ENCODE measurements at regions of chr17 and their contacts with region 1.

Region 1: DNA sequence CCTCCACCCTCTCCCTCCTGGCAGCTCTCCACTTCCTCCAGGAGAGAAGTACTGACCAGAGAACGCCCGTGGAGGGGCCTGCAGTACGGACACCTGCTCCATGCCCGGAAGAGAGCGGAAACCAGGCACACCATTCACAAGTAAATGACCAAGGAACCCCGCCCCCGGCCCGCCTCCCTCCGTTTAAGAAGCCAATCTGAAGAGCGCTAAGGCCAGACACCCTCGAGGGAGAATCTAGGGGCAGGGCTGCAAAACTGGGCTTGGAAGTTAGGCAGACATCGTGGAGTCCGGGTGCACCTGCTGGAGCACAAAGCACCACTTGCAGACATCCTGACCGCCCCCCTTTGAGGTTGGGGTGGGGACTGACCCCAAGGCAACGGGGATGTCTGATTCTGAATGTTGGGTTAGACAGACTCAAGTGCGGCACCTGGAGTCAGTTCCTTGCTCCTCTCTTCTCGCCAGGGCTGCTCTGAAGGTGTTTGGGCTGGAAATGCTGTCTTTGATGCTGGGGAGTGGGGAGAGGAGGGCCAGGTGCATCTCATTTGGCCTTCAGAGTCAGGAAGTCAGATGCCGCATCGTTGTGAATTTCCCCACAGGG is 964 bp upstream of the FAAP100 start:
- DNase-seq: peak; percentile 92
- H3K4me3 Mint-ChIP-seq: peak overlapping the region; percentile 82
- H3K27ac Mint-ChIP-seq: peak overlapping the region; percentile 81
- H3K4me1 Mint-ChIP-seq: peaks cover 6% of the 10 kb centered on the region
- H3K27me3 Mint-ChIP-seq: no peaks in the 10 kb centered on the region
- CTCF ChIP-seq: no peak

Region 2: DNA sequence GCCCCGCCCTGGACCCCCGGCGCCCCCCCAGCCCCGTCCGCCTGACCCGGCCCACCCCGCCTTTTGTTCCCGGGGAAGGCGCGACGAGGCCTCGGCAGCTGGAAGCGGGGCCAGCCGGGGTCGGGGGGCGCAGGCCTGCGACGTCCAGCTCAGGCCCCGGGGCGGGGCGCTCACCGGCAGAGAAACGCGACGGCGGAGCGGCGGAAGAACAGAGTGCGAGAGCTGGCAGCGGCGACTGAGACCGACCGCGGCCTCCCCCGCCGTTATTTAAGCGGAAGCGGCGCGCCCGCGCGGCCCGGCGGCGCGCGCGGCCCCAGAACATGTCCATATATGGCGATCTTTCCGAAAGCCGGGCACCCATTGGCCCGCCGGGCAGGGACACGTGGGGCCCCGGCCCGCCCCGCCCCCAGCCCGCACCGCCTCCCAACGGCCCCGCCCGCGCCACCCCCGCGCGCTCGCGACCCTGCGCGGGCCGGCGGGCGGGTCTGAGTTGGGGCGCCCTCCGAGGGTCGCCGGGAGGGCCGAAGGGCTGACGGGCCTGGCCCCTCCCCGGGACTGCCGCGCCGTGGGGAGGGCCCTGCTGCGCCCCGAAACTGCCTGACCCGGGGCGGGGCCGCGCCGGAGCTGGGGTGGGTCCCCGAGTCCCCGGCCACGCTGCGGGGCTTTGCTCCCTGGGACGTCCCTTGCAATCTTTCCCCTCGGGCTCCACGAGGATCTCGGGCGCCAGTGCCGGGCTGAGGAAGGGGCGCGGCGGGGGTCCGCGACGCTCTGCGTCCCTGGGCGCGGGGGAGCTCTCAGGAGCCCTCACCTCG is 40.4 kb before region 1 on chr17 and contains the start of gene ACTG1:
- CTCF ChIA-PET with region 1: interaction called, 3 read pairs
- POLR2A ChIA-PET with region 1: interaction called, 25 read pairs
- intact Hi-C with region 1: no loop called
- DNase-seq: peak; percentile 92
- H3K4me3 Mint-ChIP-seq: peak within 1 kb of the TSS; percentile 92
- H3K27ac Mint-ChIP-seq: peak within 1 kb of the TSS; percentile 91
- H3K4me1 Mint-ChIP-seq: peaks cover 25% of the 10 kb centered on the region
- H3K27me3 Mint-ChIP-seq: no peaks in the 10 kb centered on the region
- CTCF ChIP-seq: no peak
- total RNA-seq, gene ACTG1: 1,056 and 1,461 TPM in 2 replicates

Region 3: DNA sequence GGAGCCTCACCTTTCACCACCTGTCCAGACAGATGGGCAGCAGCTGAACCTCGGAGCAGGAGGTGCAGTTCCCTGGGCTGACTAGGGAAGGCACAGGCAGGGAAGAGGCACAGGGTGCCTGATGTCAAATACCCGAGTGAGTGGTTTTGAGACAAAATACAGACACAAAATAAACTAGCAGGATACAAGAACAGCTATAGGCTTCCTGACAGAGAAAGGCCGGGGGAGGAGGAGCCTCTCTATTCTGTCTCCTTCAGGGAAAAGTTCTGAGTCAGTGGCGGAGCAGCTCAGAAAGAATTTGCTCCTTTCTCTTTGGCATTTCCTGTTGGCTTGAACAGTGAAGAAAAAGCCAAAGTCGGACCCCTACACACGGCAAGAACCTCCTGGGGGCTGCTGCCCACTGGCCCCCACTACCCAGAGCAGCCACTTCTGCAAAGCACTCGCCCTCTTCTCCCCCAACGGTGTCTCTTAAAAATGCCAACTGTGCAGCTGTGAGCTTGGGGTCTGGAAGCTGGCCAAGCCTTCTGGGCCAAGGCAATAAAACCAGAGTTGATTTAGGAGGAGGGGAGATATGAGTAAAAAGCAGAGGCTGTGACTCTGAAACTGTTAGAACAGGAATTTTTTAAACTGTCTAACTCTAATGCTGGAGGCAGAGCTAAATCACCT is 13.5 kb after region 1 on chr17:
- CTCF ChIA-PET with region 1: interaction called, 3 read pairs
- POLR2A ChIA-PET with region 1: interaction called, 65 read pairs
- intact Hi-C with region 1: no loop called
- DNase-seq: peak; percentile 88
- H3K4me3 Mint-ChIP-seq: peak overlapping the region; percentile 63
- H3K27ac Mint-ChIP-seq: peak overlapping the region; percentile 71
- H3K4me1 Mint-ChIP-seq: peaks cover 14% of the 10 kb centered on the region
- H3K27me3 Mint-ChIP-seq: no peaks in the 10 kb centered on the region
- CTCF ChIP-seq: no peak

Region 4: GRCh38 chr17:81601525-81602120 is 48.5 kb after region 1 on chr17:
- CTCF ChIA-PET with region 1: interaction called, 28 read pairs
- POLR2A ChIA-PET with region 1: interaction called, 12 read pairs
- intact Hi-C with region 1: loop called (anchors 1 kb)
- DNase-seq: peak; percentile 72
- H3K4me3 Mint-ChIP-seq: no peak overlapping the region
- H3K27ac Mint-ChIP-seq: no peak overlapping the region
- H3K4me1 Mint-ChIP-seq: no peaks in the 10 kb centered on the region
- H3K27me3 Mint-ChIP-seq: no peaks in the 10 kb centered on the region
- CTCF ChIP-seq: peak; percentile 80

Region 5: DNA sequence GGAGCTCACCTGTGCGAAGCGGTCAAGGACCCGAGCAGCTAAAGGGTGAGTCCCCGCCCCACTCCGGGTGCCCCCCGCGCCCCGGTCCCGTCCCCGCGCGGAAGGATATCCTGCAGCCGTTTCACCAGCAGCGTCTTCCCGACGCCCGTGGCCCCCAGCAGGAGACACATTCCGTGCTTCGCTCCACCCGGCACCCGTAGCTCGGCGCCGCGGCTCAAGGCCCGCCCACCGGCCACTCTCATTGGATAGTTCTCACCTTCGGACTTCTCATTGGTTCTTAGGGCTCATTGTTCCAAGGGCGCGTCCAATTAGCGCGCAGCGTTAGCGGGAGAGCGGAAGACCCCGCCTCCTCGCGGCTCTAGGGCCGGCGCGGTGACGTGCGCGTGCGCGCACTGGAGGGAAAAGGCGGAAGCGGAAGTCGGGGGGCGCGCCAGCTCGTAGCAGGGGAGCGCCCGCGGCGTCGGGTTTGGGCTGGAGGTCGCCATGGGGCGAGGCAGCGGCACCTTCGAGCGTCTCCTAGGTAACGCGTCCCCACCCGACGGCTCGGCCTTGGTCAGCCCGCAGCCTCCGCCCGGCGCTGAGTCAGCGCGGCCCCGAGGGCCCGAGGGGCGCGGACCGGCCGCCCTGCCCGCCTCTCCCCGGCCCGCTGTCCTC is 130.6 kb after region 1 on chr17 and contains the starts of genes ARL16 and HGS:
- CTCF ChIA-PET with region 1: no interaction called
- POLR2A ChIA-PET with region 1: interaction called, 12 read pairs
- intact Hi-C with region 1: no loop called
- DNase-seq: peak; percentile 99
- H3K4me3 Mint-ChIP-seq: peak within 1 kb of the TSS; percentile 91
- H3K27ac Mint-ChIP-seq: peak within 1 kb of the TSS; percentile 89
- H3K4me1 Mint-ChIP-seq: peaks cover 5% of the 10 kb centered on the region
- H3K27me3 Mint-ChIP-seq: no peaks in the 10 kb centered on the region
- CTCF ChIP-seq: no peak
- total RNA-seq, gene ARL16: 34.8 and 38.6 TPM in 2 replicates
- total RNA-seq, gene HGS: 160 and 178 TPM in 2 replicates